Activated CD4-positive, alpha-beta memory T cell treated with anti-CD3 and anti-CD28 coated beads for 36 hours (primary cell): ENCODE measurements at regions of chr12 and their contacts with region 1.

Region 1: GRCh38 chr12:65196762-65197567 is 27.6 kb downstream of the LEMD3 start:
- DNase-seq: no peak
- H3K4me3 Mint-ChIP-seq: no peak overlapping the region
- H3K27ac Mint-ChIP-seq: peak overlapping the region; percentile 54
- H3K4me1 Mint-ChIP-seq: peaks cover 57% of the 10 kb centered on the region
- H3K27me3 Mint-ChIP-seq: no peaks in the 10 kb centered on the region

Region 2: DNA sequence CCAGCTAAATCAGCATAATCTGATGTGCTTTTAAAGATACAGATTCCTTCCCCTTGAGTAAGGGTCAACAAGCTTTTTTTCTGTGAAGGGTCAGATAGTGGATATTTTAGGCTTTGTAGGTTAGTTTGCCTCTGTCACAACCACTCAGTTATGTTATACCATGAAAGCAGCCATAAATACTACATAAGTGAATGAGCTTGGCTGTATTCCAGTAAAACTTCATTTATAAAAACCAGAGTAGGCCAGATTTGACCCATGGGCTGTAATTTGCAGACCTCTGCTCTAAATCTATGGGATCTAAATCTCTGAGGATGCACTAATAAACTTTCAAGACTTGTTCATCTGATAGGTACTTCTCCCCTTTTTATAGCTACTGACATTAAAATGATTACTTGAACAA is 20.1 kb after region 1 on chr12:
- CTCF ChIA-PET with region 1: no interaction called
- POLR2A ChIA-PET with region 1: no interaction called
- intact Hi-C with region 1: no loop called
- DNase-seq: no peak
- H3K4me3 Mint-ChIP-seq: no peak overlapping the region
- H3K27ac Mint-ChIP-seq: no peak overlapping the region
- H3K4me1 Mint-ChIP-seq: peaks cover 6% of the 10 kb centered on the region
- H3K27me3 Mint-ChIP-seq: no peaks in the 10 kb centered on the region

Region 3: GRCh38 chr12:65232476-65233077 is 35.6 kb after region 1 on chr12:
- CTCF ChIA-PET with region 1: interaction called, 10 read pairs
- POLR2A ChIA-PET with region 1: no interaction called
- intact Hi-C with region 1: no loop called
- DNase-seq: no peak
- H3K4me3 Mint-ChIP-seq: no peak overlapping the region
- H3K27ac Mint-ChIP-seq: no peak overlapping the region
- H3K4me1 Mint-ChIP-seq: peaks cover 6% of the 10 kb centered on the region
- H3K27me3 Mint-ChIP-seq: no peaks in the 10 kb centered on the region

Region 4: DNA sequence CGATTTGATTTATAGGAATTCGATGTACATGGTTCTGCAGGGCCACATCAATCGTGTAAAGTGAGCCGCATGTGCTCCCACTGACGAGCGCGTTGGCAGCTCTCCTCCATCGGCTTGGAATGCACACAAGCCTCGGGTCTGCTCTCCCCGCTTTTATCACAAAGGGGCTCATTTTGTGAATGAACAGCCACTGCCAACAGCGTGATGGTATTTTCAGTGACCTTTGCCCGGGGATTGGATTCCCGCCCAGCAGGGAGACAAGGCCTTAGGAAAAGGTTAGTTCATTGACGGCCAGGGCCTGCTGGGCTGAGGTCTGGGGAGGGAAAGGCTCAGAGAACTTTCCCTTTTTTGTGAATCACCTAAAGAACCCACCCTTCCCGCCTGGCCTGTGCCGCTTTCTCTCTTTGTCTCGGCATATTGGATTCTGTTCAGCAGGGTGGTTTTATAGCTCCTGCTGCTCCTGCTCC is 313.7 kb after region 1 on chr12:
- CTCF ChIA-PET with region 1: no interaction called
- POLR2A ChIA-PET with region 1: no interaction called
- intact Hi-C with region 1: no loop called
- DNase-seq: no peak
- H3K4me3 Mint-ChIP-seq: no peak overlapping the region
- H3K27ac Mint-ChIP-seq: no peak overlapping the region
- H3K4me1 Mint-ChIP-seq: no peaks in the 10 kb centered on the region
- H3K27me3 Mint-ChIP-seq: no peaks in the 10 kb centered on the region